ENCODE measurements at regions of chr1 and their contacts with region 1.

Region 1: DNA sequence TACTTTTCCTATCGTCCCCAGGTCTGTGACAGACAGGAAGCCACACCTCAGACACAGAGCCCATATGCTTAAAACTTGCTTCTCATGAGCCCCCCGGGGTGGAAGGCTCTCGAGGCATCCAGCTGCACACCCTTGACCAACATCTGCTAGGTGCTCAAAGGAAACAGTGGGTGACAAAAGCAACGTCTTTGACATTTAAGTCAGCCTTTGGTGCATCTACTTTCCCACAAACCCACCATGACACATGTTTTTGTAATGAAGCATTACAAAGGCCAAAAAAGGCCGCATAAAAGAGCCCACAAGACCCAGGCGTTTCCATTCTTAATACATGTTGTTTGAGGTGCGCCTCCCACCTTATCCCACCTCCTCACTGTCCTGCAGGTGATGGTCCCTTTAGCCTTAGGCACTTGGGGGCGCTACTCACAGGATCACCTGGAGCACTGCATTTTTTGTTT is 11.8 kb upstream of the FASLG start:
- DNase-seq: no peak
- ATAC-seq: no peak

Region 2: DNA sequence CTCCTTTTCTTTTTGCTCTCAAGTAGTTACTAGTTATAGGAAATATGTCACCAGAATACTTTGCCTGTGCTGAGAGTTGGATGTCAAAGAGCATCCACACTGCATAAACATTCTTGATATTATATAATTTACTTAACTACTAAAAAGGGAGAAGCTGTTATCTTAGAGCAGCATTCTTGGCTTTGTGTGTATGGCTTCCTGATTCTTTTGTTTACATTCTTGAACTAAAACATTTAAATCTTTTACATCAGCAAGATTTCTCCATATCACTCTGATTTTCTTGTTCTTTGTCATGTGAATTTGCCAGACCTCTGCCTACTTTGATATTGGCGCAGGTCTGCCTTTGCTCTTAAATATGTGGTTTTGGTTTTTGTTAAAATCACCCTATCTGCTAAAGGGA is 65.4 kb before region 1 on chr1:
- intact Hi-C with region 1: no loop called
- DNase-seq: no peak
- ATAC-seq: no peak

Region 3: DNA sequence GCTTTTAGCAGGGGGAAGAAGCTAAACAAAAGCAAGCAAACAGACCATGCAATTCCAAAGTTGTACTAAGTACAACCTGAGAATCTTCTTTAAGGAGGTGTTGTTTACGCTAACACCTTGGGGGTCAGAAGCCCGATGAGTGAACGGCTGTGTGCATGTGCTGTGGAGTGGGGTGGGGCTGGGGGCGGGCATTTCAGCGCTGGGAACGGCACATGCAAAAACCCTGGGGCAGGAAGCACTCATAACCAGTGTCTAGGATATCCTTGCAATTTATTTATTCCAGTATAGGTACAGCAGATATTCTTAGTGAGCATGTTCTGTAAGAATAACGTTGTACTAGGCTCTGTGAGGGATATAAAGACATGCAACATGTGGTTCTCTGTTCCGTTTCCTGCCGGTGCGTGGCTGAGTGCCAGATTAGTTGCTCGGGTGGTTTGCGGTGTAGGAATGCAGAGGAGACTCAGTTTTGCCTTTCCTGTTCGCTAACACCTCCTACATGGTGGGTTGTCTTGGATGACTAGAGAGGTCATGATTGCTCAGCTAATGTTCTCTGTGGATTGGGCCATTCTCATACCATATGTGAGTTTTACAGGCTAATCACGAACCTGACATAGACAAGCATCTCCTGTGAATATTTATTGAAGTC is 15.4 kb after region 1 on chr1:
- intact Hi-C with region 1: no loop called
- DNase-seq: peak; percentile 76
- ATAC-seq: peak; percentile 18

Region 4: GRCh38 chr1:172699111-172699510 is 52.0 kb after region 1 on chr1:
- intact Hi-C with region 1: loop called (anchors 5 kb)
- DNase-seq: no peak
- ATAC-seq: no peak

Measured in Right ventricle myocardium inferior (tissue), 1 donor.